ENCODE measurements at regions of chr6 and their contacts with region 1.

Region 1: DNA sequence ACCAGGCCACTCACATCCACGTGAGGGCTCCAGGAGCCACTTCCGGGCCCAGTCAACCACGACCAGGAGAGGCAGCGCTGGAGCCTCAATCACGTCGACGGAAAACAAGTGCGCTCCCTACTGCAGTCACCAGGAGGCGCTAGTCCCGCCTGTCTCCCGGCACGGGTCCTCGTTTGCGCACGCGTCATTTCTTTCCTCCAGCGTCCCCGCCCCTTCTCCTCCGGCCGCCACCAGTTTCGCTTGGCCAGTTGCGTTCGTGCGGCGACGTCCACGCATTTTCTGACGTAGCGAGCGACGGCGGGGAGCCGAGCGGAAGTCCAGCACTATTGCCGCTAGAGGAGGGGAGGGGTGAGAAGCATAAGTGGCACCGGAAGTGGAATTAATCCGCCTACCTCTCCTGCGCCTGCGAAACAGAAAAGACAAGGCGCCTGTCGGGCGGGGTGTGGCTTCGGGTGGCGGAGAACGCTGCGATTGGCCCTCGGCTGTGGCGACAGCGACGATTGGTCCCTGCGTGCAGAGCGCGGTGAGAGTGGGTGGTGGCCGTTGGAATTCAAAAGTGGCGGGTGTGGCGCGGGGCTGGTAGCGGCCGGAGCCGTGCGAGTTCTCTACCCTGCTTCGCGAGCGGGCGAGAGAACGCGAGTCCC is at the start of gene KIFC1:
- DNase-seq: peak; percentile 100
- ATAC-seq: peak; percentile 90
- H3K4me3 Mint-ChIP-seq: peak within 1 kb of the TSS; percentile 88
- H3K27ac Mint-ChIP-seq: peak within 1 kb of the TSS; percentile 96
- H3K4me1 Mint-ChIP-seq: peaks cover 37% of the 10 kb centered on the region
- H3K27me3 Mint-ChIP-seq: no peaks in the 10 kb centered on the region
- total RNA-seq, gene KIFC1: 86.0 to 89.3 TPM

Region 2: GRCh38 chr6:33276864-33277662 is 114.3 kb before region 1 on chr6 and contains the start of gene B3GALT4:
- CTCF ChIA-PET with region 1: interaction called, 3 read pairs
- POLR2A ChIA-PET with region 1: interaction called, 5 read pairs
- intact Hi-C with region 1: loop called in 1 of 2 experiments (anchors 1 kb)
- DNase-seq: peak; percentile 87
- ATAC-seq: peak; percentile 75
- H3K4me3 Mint-ChIP-seq: peak within 1 kb of the TSS; percentile 91
- H3K27ac Mint-ChIP-seq: peak within 1 kb of the TSS; percentile 92
- H3K4me1 Mint-ChIP-seq: peaks cover 39% of the 10 kb centered on the region
- H3K27me3 Mint-ChIP-seq: no peaks in the 10 kb centered on the region
- total RNA-seq, gene B3GALT4: 2.8 to 3.5 TPM

Region 3: GRCh38 chr6:33317669-33318425 is 73.6 kb before region 1 on chr6 and contains the start of gene ZBTB22:
- CTCF ChIA-PET with region 1: interaction called, 3 read pairs
- POLR2A ChIA-PET with region 1: no interaction called
- intact Hi-C with region 1: loop called (anchors 1 kb)
- DNase-seq: peak; percentile 98
- ATAC-seq: peak; percentile 69
- H3K4me3 Mint-ChIP-seq: peak within 1 kb of the TSS; percentile 80
- H3K27ac Mint-ChIP-seq: peak within 1 kb of the TSS; percentile 93
- H3K4me1 Mint-ChIP-seq: peaks cover 70% of the 10 kb centered on the region
- H3K27me3 Mint-ChIP-seq: no peaks in the 10 kb centered on the region
- total RNA-seq, gene ZBTB22: 9.0 to 9.9 TPM

Region 4: GRCh38 chr6:33410050-33410710 is 18.8 kb after region 1 on chr6:
- CTCF ChIA-PET with region 1: interaction called, 5 read pairs
- POLR2A ChIA-PET with region 1: interaction called, 7 read pairs
- intact Hi-C with region 1: loop called (anchors 1 kb)
- DNase-seq: peak; percentile 98
- ATAC-seq: peak; percentile 88
- H3K4me3 Mint-ChIP-seq: peak overlapping the region; percentile 80
- H3K27ac Mint-ChIP-seq: peak overlapping the region; percentile 96
- H3K4me1 Mint-ChIP-seq: peaks cover 31% of the 10 kb centered on the region
- H3K27me3 Mint-ChIP-seq: no peaks in the 10 kb centered on the region

Region 5: GRCh38 chr6:33430991-33431879 is 39.8 kb after region 1 on chr6:
- CTCF ChIA-PET with region 1: interaction called, 11 read pairs
- POLR2A ChIA-PET with region 1: interaction called, 7 read pairs
- intact Hi-C with region 1: loop called (anchors 1 to 2 kb)
- DNase-seq: peak; percentile 89
- ATAC-seq: peak; percentile 62
- H3K4me3 Mint-ChIP-seq: peak overlapping the region; percentile 84
- H3K27ac Mint-ChIP-seq: peak overlapping the region; percentile 56
- H3K4me1 Mint-ChIP-seq: peaks cover 58% of the 10 kb centered on the region
- H3K27me3 Mint-ChIP-seq: no peaks in the 10 kb centered on the region

Region 6: GRCh38 chr6:33557376-33557775 is 166.0 kb after region 1 on chr6:
- CTCF ChIA-PET with region 1: no interaction called
- POLR2A ChIA-PET with region 1: no interaction called
- intact Hi-C with region 1: no loop called
- DNase-seq: no peak
- ATAC-seq: no peak
- H3K4me3 Mint-ChIP-seq: no peak overlapping the region
- H3K27ac Mint-ChIP-seq: no peak overlapping the region
- H3K4me1 Mint-ChIP-seq: peaks cover 3% of the 10 kb centered on the region
- H3K27me3 Mint-ChIP-seq: no peaks in the 10 kb centered on the region

Region 7: GRCh38 chr6:33579828-33580714 is 188.7 kb after region 1 on chr6 and contains the start of gene BAK1:
- CTCF ChIA-PET with region 1: no interaction called
- POLR2A ChIA-PET with region 1: no interaction called
- intact Hi-C with region 1: loop called in 1 of 2 experiments (anchors 2 kb)
- DNase-seq: peak; percentile 92
- ATAC-seq: peak; percentile 95
- H3K4me3 Mint-ChIP-seq: peak within 1 kb of the TSS; percentile 95
- H3K27ac Mint-ChIP-seq: peak within 1 kb of the TSS; percentile 98
- H3K4me1 Mint-ChIP-seq: peaks cover 31% of the 10 kb centered on the region
- H3K27me3 Mint-ChIP-seq: no peaks in the 10 kb centered on the region
- total RNA-seq, gene BAK1: 37.0 to 43.3 TPM

Region 8: GRCh38 chr6:33654831-33655554 is 263.6 kb after region 1 on chr6:
- CTCF ChIA-PET with region 1: no interaction called
- POLR2A ChIA-PET with region 1: no interaction called
- intact Hi-C with region 1: no loop called
- DNase-seq: no peak
- ATAC-seq: no peak
- H3K4me3 Mint-ChIP-seq: no peak overlapping the region
- H3K27ac Mint-ChIP-seq: no peak overlapping the region
- H3K4me1 Mint-ChIP-seq: peaks cover 2% of the 10 kb centered on the region
- H3K27me3 Mint-ChIP-seq: no peaks in the 10 kb centered on the region

Region 9: GRCh38 chr6:33720994-33721393 is 329.6 kb after region 1 on chr6:
- CTCF ChIA-PET with region 1: no interaction called
- POLR2A ChIA-PET with region 1: no interaction called
- intact Hi-C with region 1: no loop called
- DNase-seq: no peak
- ATAC-seq: no peak
- H3K4me3 Mint-ChIP-seq: no peak overlapping the region
- H3K27ac Mint-ChIP-seq: no peak overlapping the region
- H3K4me1 Mint-ChIP-seq: peaks cover 17% of the 10 kb centered on the region
- H3K27me3 Mint-ChIP-seq: no peaks in the 10 kb centered on the region